GM18951 (cell line): ENCODE measurements at regions of chr1 and their contacts with region 1.

Region 1: DNA sequence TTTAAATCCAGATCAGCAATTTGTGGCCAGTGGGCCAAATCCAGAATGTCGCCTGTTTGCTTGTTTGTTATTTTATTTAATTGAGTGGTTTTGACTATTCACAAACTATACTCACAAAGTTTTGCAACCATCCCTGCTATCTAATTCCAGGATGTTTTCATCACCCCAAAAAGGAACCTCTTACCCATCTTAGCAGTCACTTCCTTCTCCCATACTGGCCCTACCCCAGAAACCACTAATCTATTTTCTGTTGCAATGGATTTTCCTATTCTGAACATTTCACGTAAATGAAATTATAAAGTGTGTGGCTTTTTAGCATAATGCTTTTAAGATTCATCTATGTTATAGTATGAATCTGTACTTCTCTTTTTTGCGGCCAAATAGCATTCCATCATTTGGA is 41.3 kb downstream of the WDTC1 start:
- POLR2A ChIP-seq: no peak

Region 2: GRCh38 chr1:27102707-27103491 is 172.8 kb before region 1 on chr1:
- in situ Hi-C with region 1: loop called (anchors 5 kb)
- POLR2A ChIP-seq: no peak

Region 3: DNA sequence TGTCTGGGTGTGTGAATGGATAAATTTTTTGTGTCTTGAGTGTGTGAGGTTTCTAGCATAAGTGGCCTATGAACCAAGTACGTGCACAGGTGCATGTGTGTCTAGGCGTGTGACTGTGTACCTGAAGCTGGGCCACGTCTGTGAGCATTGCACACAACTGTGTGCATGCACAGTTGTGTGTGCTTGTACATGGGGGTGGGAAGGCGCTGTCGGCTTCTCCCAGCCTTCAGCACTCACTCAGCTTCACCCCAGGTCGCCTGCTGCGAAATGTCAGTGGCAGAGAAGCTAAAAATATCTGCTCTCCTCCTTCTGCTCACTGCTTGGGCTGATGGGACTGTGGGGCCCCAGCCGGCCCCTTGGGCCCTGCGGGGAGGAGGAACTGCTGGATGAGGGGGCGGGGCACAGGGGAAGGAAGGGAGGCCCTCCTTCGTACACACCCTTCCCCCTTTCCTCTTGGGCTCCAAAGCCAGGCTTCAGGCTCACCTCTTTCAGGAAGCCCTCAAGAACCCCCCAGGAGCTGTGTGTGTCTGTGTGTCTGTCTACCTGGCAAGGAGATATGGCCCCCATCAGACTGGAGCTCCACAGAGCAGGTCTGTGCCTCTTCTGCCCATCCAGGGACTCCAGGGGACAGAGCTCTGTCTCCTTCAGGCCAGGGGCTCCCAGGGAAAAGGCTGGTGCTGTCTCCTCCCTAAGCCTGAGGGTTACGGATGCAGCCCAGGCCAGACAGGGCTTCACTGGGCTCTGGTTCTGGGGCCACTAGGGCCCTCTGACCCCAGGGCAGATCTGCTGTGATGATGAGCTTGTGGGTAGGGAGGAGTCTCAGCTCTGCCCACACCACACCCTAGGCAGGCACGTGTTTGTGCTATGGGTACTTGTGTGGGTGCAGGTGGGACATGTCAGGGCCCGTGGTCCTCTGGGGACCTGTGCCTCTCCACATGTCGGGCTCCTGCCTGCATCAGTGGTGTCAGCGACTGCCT is 249.9 kb after region 1 on chr1:
- in situ Hi-C with region 1: no loop called
- POLR2A ChIP-seq: peak; percentile 19